Psoas muscle (tissue), 8 donors: ENCODE measurements at regions of chr17 and their contacts with region 1.

Region 1: GRCh38 chr17:19648475-19649406 is at the start of gene ALDH3A2:
- DNase-seq: peak; percentile 98
- ATAC-seq: peak; percentile 96 to 98 (median 96)
- H3K4me3 ChIP-seq: peak within 1 kb of the TSS; percentile 84
- H3K27ac ChIP-seq: peak within 1 kb of the TSS; percentile 94
- H3K4me1 ChIP-seq: peaks cover 40% of the 10 kb centered on the region
- H3K27me3 ChIP-seq: no peaks in the 10 kb centered on the region
- CTCF ChIP-seq: peak; percentile 16
- total RNA-seq, gene ALDH3A2: 57.6 to 229 (median 86.2) TPM

Region 2: GRCh38 chr17:19513897-19514488 is 134.7 kb before region 1 on chr17:
- intact Hi-C with region 1: loop called (anchors 2 to 5 kb)
- DNase-seq: peak; percentile 56 to 72
- ATAC-seq: peak; percentile 79 to 92 (median 81)
- H3K4me3 ChIP-seq: peak overlapping the region; percentile 5
- H3K27ac ChIP-seq: peak overlapping the region; percentile 40
- H3K4me1 ChIP-seq: peaks cover 6% of the 10 kb centered on the region
- H3K27me3 ChIP-seq: no peaks in the 10 kb centered on the region
- CTCF ChIP-seq: peak; percentile 93

Region 3: DNA sequence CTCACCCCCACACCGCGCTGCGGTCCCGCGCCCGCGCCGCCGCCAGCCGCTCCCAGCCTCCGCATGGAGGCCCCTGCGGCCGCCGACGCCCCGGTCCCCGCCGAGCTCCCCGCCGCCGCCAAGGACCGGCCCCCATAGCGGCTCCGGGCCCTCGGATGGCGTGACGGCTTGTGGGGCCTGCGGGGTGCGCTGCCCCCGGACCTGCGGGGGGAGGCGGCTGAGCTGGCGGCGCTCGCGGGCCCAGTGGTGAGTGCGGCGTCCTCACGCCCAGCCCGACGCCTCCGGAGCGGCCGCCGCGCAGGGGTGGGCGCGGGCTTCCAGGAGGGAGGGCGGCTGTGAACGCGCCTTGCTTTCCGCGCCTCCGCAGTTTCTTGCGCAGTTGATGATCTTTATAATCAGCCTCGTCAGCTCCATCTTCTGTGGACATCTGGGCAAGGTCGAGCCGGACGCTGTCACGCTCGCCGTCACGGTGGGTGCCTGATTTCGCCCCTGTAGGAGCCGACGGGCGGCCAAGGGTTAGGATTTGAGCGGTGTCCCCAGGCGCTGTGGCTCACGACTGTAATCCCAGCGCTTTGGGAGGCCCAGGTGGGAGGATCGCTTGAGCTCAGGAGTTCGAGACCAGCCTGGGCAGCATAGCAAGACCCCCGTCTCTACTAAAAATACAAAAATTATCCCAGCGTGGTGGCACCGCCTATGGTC is 68.7 kb before region 1 on chr17:
- intact Hi-C with region 1: loop called in 1 of 2 experiments (anchors 5 kb)
- DNase-seq: peak; percentile 49 to 54
- ATAC-seq: peak; percentile 63 to 73 (median 70)
- H3K4me3 ChIP-seq: peak overlapping the region; percentile 64
- H3K27ac ChIP-seq: no peak overlapping the region
- H3K4me1 ChIP-seq: no peaks in the 10 kb centered on the region
- H3K27me3 ChIP-seq: peaks cover 0 to 8% (median 1%) of the 10 kb centered on the region in 3 donors
- CTCF ChIP-seq: no peak